ENCODE measurements at regions of chr2 and their contacts with region 1.

Region 1: DNA sequence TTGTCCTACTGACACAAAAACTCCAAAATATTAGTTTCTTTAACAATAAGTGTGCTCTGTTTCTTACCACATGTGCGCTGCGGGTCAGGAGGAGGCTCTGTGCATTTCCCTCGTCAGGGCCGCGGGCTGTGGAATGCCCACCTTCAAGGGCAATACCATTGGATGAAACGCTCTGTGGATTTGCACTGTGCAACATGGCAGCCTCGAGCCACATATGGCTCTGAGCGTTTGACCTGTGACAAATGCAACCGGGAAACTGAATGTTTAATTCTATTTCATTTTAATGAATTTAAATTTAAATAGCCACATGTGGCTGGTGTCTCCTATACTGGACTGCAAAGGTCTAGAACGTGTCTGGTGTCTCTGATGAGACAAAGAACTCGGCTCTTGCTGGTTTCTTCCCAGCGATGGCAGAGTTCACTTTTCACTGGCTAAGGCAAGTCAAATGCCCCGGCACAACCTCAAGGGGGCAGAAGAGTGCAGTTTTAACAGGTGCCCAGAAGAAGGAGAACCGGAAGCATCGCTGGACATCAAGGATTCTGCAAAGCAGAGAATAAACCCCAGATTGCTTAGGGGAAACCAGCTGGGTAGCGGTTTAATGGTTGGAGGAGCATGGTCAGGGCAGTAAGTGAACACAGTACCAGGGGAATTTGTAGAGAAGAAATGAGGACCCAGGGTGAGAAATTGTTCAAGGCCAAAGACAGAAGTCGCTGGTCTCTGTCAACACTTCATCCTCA is 37.0 kb upstream of the TMEM18 start:
- DNase-seq: peak; percentile 83
- H3K4me3 ChIP-seq: no peak overlapping the region; a peak in 1 of 4 replicates
- H3K27ac ChIP-seq: no peak overlapping the region
- H3K4me1 ChIP-seq: peaks cover 0 to 6% of the 10 kb centered on the region in 2 experiments; a peak in 1 of 4 replicates
- H3K27me3 ChIP-seq: no peaks in the 10 kb centered on the region; the same call in 1 of the 2 replicates
- CTCF ChIP-seq: peak; percentile 93
- EP300 ChIP-seq: no peak
- RAD21 ChIP-seq: peak; percentile 93

Region 2: GRCh38 chr2:348361-348916 is 365.7 kb before region 1 on chr2:
- CTCF ChIA-PET with region 1: no interaction called
- POLR2A ChIA-PET with region 1: no interaction called
- DNase-seq: no peak
- H3K4me3 ChIP-seq: no peak overlapping the region
- H3K27ac ChIP-seq: no peak overlapping the region
- H3K4me1 ChIP-seq: no peaks in the 10 kb centered on the region; a peak in 1 of 4 replicates
- H3K27me3 ChIP-seq: no peaks in the 10 kb centered on the region
- CTCF ChIP-seq: no peak
- EP300 ChIP-seq: no peak
- RAD21 ChIP-seq: no peak

Region 3: DNA sequence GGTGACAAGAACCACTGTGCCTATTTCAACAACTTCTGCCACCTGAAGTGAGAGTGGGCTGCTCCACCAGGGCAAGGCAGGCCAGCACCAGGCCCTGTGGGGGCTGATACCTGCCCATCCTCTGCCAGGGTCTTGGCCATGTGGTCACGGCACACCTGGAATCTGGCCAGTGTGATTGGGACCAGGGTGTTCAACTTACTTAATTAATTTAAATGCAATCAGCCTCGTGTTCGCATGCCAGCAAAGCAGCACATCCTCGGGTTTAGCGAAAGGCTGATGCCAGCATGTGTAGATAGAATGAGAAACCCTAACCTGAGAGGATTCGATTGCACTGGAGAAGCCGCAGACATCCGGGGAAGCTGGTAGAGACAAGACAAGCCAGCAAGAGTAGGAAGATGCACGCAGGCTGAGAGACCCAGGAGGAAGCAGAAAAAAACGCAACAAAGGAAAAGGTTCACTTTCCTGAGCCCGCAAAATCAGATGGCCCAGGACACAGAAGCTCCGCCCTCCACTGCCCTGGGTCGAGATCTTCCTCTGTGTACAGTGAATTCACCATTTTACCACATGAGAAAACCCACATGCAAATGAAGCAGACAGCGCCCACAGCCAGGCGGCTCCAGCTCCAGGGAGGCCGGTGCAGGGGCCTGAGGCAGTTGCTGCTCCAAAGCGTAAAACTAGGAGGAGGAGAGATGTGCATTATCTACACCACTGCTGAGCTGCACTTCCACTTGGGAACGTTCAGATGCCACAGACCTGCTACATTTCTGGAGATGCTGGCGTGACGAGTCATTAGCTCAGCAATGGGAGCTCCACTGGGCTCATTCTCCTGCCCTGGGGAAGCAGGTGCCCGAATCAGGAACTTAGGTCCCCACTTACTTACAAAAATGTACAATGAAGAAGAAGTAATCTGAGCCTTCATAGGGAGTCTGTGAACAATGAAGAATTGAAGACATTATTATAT is 129.0 kb before region 1 on chr2:
- CTCF ChIA-PET with region 1: no interaction called
- POLR2A ChIA-PET with region 1: no interaction called
- DNase-seq: no peak
- H3K4me3 ChIP-seq: no peak overlapping the region
- H3K27ac ChIP-seq: peak overlapping the region in 1 of 2 experiments; percentile 74; a peak in 2 of 4 replicates
- H3K4me1 ChIP-seq: peaks cover 0 to 39% of the 10 kb centered on the region in 2 experiments; a peak in 2 of 4 replicates
- H3K27me3 ChIP-seq: no peaks in the 10 kb centered on the region
- CTCF ChIP-seq: no peak
- EP300 ChIP-seq: no peak
- RAD21 ChIP-seq: no peak

Region 4: GRCh38 chr2:621303-622099 is 92.7 kb before region 1 on chr2:
- CTCF ChIA-PET with region 1: no interaction called
- POLR2A ChIA-PET with region 1: no interaction called
- DNase-seq: no peak
- H3K4me3 ChIP-seq: no peak overlapping the region
- H3K27ac ChIP-seq: no peak overlapping the region
- H3K4me1 ChIP-seq: peaks cover 0 to 31% of the 10 kb centered on the region in 2 experiments; a peak in 2 of 4 replicates
- H3K27me3 ChIP-seq: no peaks in the 10 kb centered on the region
- CTCF ChIP-seq: no peak
- EP300 ChIP-seq: no peak
- RAD21 ChIP-seq: no peak

Region 5: DNA sequence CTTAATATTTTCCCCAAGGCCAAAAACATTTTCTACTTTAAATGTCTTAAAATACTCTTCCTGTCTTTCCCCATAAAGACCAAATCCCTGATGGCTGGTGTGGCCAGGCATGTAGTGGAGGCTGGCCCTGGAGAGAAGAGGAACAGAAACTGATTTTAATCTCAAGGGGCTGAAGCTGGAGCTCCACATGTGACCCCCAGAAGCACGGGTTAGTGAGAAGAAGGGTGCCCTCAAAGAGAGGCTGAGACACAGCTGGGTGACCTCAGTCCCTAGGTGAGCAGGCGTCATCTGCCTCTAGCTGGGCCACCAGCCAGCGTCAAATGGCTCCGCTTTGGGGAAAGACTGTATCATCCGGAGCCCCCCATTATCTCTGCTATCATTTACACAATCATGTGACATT is 17.7 kb before region 1 on chr2:
- CTCF ChIA-PET with region 1: interaction called, 12 read pairs
- POLR2A ChIA-PET with region 1: no interaction called
- DNase-seq: no peak
- H3K4me3 ChIP-seq: no peak overlapping the region
- H3K27ac ChIP-seq: no peak overlapping the region
- H3K4me1 ChIP-seq: peaks cover 0 to 11% of the 10 kb centered on the region in 2 experiments; a peak in 2 of 4 replicates
- H3K27me3 ChIP-seq: no peaks in the 10 kb centered on the region
- CTCF ChIP-seq: no peak
- EP300 ChIP-seq: no peak
- RAD21 ChIP-seq: no peak

Region 6: GRCh38 chr2:735670-736582 is 21.8 kb after region 1 on chr2:
- CTCF ChIA-PET with region 1: interaction called, 32 read pairs
- POLR2A ChIA-PET with region 1: interaction called, 3 read pairs
- DNase-seq: no peak
- H3K4me3 ChIP-seq: no peak overlapping the region
- H3K27ac ChIP-seq: no peak overlapping the region
- H3K4me1 ChIP-seq: peaks cover 9 to 10% of the 10 kb centered on the region in 2 experiments; a peak in 2 of 4 replicates
- H3K27me3 ChIP-seq: no peaks in the 10 kb centered on the region
- CTCF ChIP-seq: no peak
- EP300 ChIP-seq: no peak
- RAD21 ChIP-seq: no peak

Region 7: GRCh38 chr2:746697-747096 is 32.5 kb after region 1 on chr2:
- CTCF ChIA-PET with region 1: no interaction called
- POLR2A ChIA-PET with region 1: no interaction called
- DNase-seq: peak; percentile 55
- H3K4me3 ChIP-seq: no peak overlapping the region
- H3K27ac ChIP-seq: peak overlapping the region in 1 of 2 experiments; percentile 41; a peak in 1 of 4 replicates
- H3K4me1 ChIP-seq: peaks cover 0 to 19% of the 10 kb centered on the region in 2 experiments; a peak in 3 of 4 replicates
- H3K27me3 ChIP-seq: no peaks in the 10 kb centered on the region
- CTCF ChIP-seq: no peak
- EP300 ChIP-seq: peak in 1 of 2 experiments; percentile 23; a peak in 1 of 4 replicates
- RAD21 ChIP-seq: no peak

Region 8: GRCh38 chr2:898319-898718 is 184.1 kb after region 1 on chr2:
- CTCF ChIA-PET with region 1: interaction called, 32 read pairs
- POLR2A ChIA-PET with region 1: no interaction called
- DNase-seq: peak; percentile 78
- H3K4me3 ChIP-seq: no peak overlapping the region
- H3K27ac ChIP-seq: no peak overlapping the region
- H3K4me1 ChIP-seq: no peaks in the 10 kb centered on the region
- H3K27me3 ChIP-seq: no peaks in the 10 kb centered on the region
- CTCF ChIP-seq: no peak; the same call in 1 of the 2 replicates
- EP300 ChIP-seq: no peak
- RAD21 ChIP-seq: peak; percentile 74

Region 9: DNA sequence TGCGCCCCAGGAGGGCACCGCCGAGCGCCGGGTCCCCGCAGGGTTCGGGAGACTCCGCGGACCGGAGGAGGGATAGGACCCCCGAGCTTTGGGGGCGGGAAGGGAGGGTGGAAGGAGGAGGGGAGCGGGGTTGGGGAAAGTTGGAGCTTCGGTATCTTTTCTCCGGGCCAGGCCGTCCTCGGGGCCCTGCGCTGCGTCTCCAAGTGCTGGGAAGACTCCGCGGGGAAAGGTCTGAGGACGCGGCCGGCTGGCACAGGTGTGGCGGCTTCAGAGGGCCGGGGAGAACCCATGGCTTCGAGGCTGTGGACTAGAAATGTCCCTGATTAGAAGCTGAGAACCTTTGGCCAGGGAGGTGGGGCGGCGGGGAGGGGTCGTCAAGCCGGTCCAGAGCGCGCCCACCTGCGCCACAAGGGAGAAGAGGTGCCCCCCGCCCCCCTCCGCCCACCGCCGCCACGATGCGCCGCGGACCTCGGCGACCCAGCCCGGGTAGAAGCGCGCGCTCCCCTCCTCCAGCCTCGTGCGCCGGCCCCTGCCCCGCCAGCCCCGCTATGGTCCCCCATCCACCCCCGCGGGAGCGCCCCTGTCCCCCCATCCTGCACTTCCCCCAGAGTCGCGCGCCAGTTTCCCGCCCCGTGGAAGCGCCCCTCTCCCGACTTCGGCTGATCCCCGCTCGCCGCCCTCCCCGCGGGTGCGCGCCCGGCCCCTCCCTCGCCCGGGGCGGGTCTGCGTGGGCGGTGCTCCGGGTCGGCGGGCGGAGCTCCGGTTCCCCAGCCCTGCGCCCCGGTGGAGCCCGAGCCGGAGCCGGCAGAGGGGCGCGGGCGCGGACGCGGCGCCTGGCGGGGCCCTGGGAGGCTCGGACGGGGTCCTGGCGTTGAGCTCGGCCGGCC is 236.2 kb after region 1 on chr2 and contains the start of gene SNTG2:
- CTCF ChIA-PET with region 1: interaction called, 20 read pairs
- POLR2A ChIA-PET with region 1: no interaction called
- DNase-seq: peak; percentile 97
- H3K4me3 ChIP-seq: peak within 1 kb of the TSS in 1 of 2 experiments; percentile 49; a peak in 2 of 4 replicates
- H3K27ac ChIP-seq: no peak within 1 kb of the TSS
- H3K4me1 ChIP-seq: peaks cover 0 to 6% of the 10 kb centered on the region in 2 experiments; a peak in 1 of 4 replicates
- H3K27me3 ChIP-seq: no peaks in the 10 kb centered on the region
- CTCF ChIP-seq: no peak
- EP300 ChIP-seq: no peak
- RAD21 ChIP-seq: no peak
- polyA plus RNA-seq, gene SNTG2: not detected in 2 replicates

Region 10: GRCh38 chr2:1140389-1141003 is 426.3 kb after region 1 on chr2:
- CTCF ChIA-PET with region 1: interaction called, 18 read pairs
- POLR2A ChIA-PET with region 1: no interaction called
- DNase-seq: peak; percentile 90
- H3K4me3 ChIP-seq: no peak overlapping the region
- H3K27ac ChIP-seq: no peak overlapping the region
- H3K4me1 ChIP-seq: no peaks in the 10 kb centered on the region; a peak in 1 of 4 replicates
- H3K27me3 ChIP-seq: no peaks in the 10 kb centered on the region
- CTCF ChIP-seq: peak; percentile 58
- EP300 ChIP-seq: no peak
- RAD21 ChIP-seq: peak; percentile 65

Measured in SK-N-SH (cell line).